CD4-positive, alpha-beta memory T cell (primary cell): ENCODE measurements at regions of chr2 and their contacts with region 1.

Region 1: GRCh38 chr2:70374616-70375015 is 72.7 kb upstream of the FAM136A start:
- DNase-seq: no peak
- H3K4me3 ChIP-seq: no peak overlapping the region
- H3K4me3 Mint-ChIP-seq: no peak overlapping the region
- H3K27ac ChIP-seq: no peak overlapping the region
- H3K27ac Mint-ChIP-seq: no peak overlapping the region
- H3K4me1 ChIP-seq: no peaks in the 10 kb centered on the region
- H3K4me1 Mint-ChIP-seq: no peaks in the 10 kb centered on the region
- H3K27me3 ChIP-seq: no peaks in the 10 kb centered on the region
- H3K27me3 Mint-ChIP-seq: peaks cover 3 to 4% of the 10 kb centered on the region in 2 donors

Region 2: DNA sequence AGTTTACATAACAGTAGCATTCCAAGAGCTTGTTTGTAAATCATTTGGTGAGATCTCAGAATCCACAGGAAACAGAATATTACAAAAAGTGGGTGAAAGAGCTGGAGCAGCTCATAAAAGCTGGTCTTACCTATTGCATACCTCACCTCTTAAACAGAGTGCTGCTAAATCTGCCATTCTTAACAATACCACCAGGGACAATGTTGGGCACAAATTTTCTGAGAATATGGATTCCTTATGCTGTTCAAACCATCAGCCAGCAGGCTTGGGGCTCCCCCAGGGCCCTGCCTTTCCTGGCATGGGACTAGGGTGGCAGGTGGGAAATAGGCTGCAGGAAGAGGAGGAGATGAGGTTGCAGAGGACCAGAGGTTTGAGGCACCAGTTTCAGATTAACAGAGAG is 123.4 kb after region 1 on chr2:
- CTCF ChIA-PET with region 1: no interaction called
- POLR2A ChIA-PET with region 1: no interaction called
- intact Hi-C with region 1: loop called (anchors 5 kb)
- DNase-seq: no peak
- H3K4me3 ChIP-seq: no peak overlapping the region
- H3K4me3 Mint-ChIP-seq: no peak overlapping the region
- H3K27ac ChIP-seq: no peak overlapping the region
- H3K27ac Mint-ChIP-seq: no peak overlapping the region
- H3K4me1 ChIP-seq: no peaks in the 10 kb centered on the region
- H3K4me1 Mint-ChIP-seq: peaks cover 0 to 3% (median 0%) of the 10 kb centered on the region in 4 donors
- H3K27me3 ChIP-seq: no peaks in the 10 kb centered on the region
- H3K27me3 Mint-ChIP-seq: peaks cover 10% of the 10 kb centered on the region in 2 donors